CD4-positive, alpha-beta memory T cell (primary cell): ENCODE measurements at regions of chr12 and their contacts with region 1.

Region 1: GRCh38 chr12:57815177-57816000 is 3.1 kb downstream of the AVIL start:
- DNase-seq: no peak
- H3K4me3 ChIP-seq: no peak overlapping the region
- H3K4me3 Mint-ChIP-seq: no peak overlapping the region
- H3K27ac ChIP-seq: no peak overlapping the region
- H3K27ac Mint-ChIP-seq: peak overlapping the region in 1 of 7 donors; percentile 41
- H3K4me1 ChIP-seq: no peaks in the 10 kb centered on the region
- H3K4me1 Mint-ChIP-seq: peaks cover 0 to 8% (median 5%) of the 10 kb centered on the region in 4 donors
- H3K27me3 ChIP-seq: no peaks in the 10 kb centered on the region
- H3K27me3 Mint-ChIP-seq: no peaks in the 10 kb centered on the region

Region 2: GRCh38 chr12:57836442-57837375 is 21.3 kb after region 1 on chr12:
- CTCF ChIA-PET with region 1: interaction called, 7 read pairs
- POLR2A ChIA-PET with region 1: interaction called, 11 read pairs
- intact Hi-C with region 1: no loop called
- DNase-seq: peak in 4 of 5 donors; percentile 42 to 69 (median 52)
- H3K4me3 ChIP-seq: peak overlapping the region; percentile 6 to 23
- H3K4me3 Mint-ChIP-seq: peak overlapping the region; percentile 41 to 78 (median 67)
- H3K27ac ChIP-seq: peak overlapping the region; percentile 62
- H3K27ac Mint-ChIP-seq: peak overlapping the region; percentile 83 to 95 (median 93)
- H3K4me1 ChIP-seq: peaks cover 99% of the 10 kb centered on the region
- H3K4me1 Mint-ChIP-seq: peaks cover 78 to 99% (median 88%) of the 10 kb centered on the region in 4 donors
- H3K27me3 ChIP-seq: no peaks in the 10 kb centered on the region
- H3K27me3 Mint-ChIP-seq: no peaks in the 10 kb centered on the region